ENCODE measurements at regions of chr6 and their contacts with region 1.

Region 1: GRCh38 chr6:37602346-37602745 is 95.3 kb downstream of the MDGA1 start:
- DNase-seq: no peak
- H3K4me3 ChIP-seq: no peak overlapping the region
- H3K27ac ChIP-seq: no peak overlapping the region
- H3K4me1 ChIP-seq: no peaks in the 10 kb centered on the region
- H3K27me3 ChIP-seq: no peaks in the 10 kb centered on the region
- CTCF ChIP-seq: no peak
- POLR2A ChIP-seq: no peak

Region 2: GRCh38 chr6:37646097-37646864 is 43.9 kb after region 1 on chr6:
- intact Hi-C with region 1: loop called (anchors 1 kb)
- DNase-seq: no peak
- H3K4me3 ChIP-seq: no peak overlapping the region
- H3K27ac ChIP-seq: no peak overlapping the region
- H3K4me1 ChIP-seq: no peaks in the 10 kb centered on the region
- H3K27me3 ChIP-seq: peaks cover 0 to 11% of the 10 kb centered on the region in 2 donors
- CTCF ChIP-seq: no peak
- POLR2A ChIP-seq: no peak

Measured in breast epithelium (tissue), 4 donors.